Thyroid gland (tissue), 4 donors: ENCODE measurements at regions of chr4 and their contacts with region 1.

Region 1: DNA sequence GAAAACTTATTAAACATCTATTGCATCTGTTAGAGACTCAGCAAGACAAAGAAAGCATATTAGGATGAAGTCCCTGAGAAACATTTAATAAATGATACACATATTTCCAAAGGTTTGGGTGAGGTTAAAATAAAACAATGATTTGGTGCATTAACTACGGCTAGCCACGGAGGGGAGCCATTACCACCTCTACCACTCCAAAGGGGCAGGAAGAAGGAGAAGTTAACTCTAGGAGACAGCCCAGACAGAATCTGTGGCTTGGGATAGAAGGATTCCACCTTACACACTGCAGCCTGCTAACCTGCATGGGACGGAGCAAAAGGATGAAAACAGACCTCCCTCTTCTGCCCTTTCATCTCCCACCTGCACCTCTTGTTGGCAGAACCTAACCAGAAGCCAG is 189.1 kb upstream of the C1QTNF7 start:
- DNase-seq: peak; percentile 11 to 43
- H3K4me3 ChIP-seq: no peak overlapping the region
- H3K27ac ChIP-seq: no peak overlapping the region
- H3K4me1 ChIP-seq: peaks cover 0 to 3% of the 10 kb centered on the region in 2 donors
- H3K27me3 ChIP-seq: no peaks in the 10 kb centered on the region
- CTCF ChIP-seq: peak in 5 of 6 experiments; percentile 36 to 70 (median 58)
- POLR2A ChIP-seq: no peak

Region 2: DNA sequence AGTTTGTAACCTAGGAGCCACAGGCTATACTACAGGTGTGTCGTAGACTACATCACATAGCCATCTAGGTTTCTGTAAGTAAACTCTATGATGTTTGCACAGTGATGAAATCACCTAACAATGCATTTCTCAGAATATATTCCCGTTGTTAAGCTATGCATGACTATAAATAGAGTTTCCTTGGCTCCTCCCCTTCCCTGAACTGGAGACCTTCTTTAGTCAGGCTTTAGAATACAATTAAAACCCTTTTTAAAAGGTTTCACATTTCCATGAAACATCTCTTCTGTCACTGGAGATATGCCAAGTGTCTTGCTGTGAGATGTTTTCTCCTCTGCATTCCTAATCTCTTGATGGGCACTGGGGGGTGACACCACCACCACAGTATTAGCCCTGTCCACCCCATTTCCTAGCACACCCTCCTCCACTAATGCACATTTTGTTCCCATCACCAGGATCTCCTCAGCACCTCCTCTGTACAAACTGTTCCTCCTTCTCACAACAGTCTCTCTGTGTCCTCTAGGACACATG is 571.0 kb before region 1 on chr4:
- intact Hi-C with region 1: no loop called
- DNase-seq: no peak
- H3K4me3 ChIP-seq: no peak overlapping the region
- H3K27ac ChIP-seq: no peak overlapping the region
- H3K4me1 ChIP-seq: no peaks in the 10 kb centered on the region
- H3K27me3 ChIP-seq: no peaks in the 10 kb centered on the region
- CTCF ChIP-seq: no peak
- POLR2A ChIP-seq: no peak

Region 3: GRCh38 chr4:15396157-15396800 is 157.6 kb after region 1 on chr4:
- intact Hi-C with region 1: loop called (anchors 5 kb)
- DNase-seq: peak; percentile 12 to 29
- H3K4me3 ChIP-seq: no peak overlapping the region
- H3K27ac ChIP-seq: no peak overlapping the region
- H3K4me1 ChIP-seq: peaks cover 0 to 28% of the 10 kb centered on the region in 2 donors
- H3K27me3 ChIP-seq: no peaks in the 10 kb centered on the region
- CTCF ChIP-seq: peak; percentile 21 to 68 (median 51)
- POLR2A ChIP-seq: no peak

Region 4: GRCh38 chr4:15457406-15458201 is 218.9 kb after region 1 on chr4:
- intact Hi-C with region 1: loop called (anchors 5 kb)
- DNase-seq: no peak
- H3K4me3 ChIP-seq: no peak overlapping the region
- H3K27ac ChIP-seq: peak overlapping the region in 1 of 3 donors; percentile 2
- H3K4me1 ChIP-seq: no peaks in the 10 kb centered on the region
- H3K27me3 ChIP-seq: no peaks in the 10 kb centered on the region
- CTCF ChIP-seq: peak; percentile 41 to 82 (median 74)
- POLR2A ChIP-seq: no peak